ENCODE measurements at regions of chr15 and their contacts with region 1.

Region 1: GRCh38 chr15:44207643-44208042 is 12.6 kb upstream of the FRMD5 start:
- DNase-seq: no peak
- ATAC-seq: no peak
- H3K4me3 Mint-ChIP-seq: no peak overlapping the region
- H3K27ac Mint-ChIP-seq: no peak overlapping the region
- H3K4me1 Mint-ChIP-seq: no peaks in the 10 kb centered on the region
- H3K27me3 Mint-ChIP-seq: peaks cover 12% of the 10 kb centered on the region

Region 2: DNA sequence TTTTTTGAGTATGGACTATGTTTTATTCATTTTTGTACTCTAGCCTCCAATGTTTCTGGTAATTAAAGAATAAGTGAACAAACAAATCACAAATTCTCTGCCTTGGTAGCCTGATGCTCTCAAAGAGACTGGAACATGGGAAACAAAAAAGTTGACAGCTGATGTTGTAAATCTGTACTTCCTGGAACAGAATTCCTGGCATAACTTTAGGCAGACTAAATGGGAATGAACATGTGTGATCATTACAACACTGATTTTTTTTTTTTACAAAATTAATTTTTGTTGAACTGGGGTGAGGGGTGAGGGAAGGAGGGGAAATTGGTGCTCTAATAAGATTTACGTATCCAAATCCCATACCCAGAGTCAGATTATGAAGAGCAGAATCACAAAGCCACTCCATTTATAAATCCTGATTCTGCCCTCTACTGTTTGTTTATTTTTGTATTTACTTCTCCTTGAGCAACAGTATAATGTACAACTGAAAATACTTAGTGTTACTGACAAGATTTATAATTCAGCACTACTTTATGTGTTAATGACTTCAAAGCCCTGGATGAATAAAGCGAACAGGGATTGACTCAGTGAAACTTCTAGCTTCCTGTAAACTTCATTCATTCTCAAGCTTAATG is 177.6 kb before region 1 on chr15:
- CTCF ChIA-PET with region 1: no interaction called
- POLR2A ChIA-PET with region 1: no interaction called
- intact Hi-C with region 1: no loop called
- DNase-seq: no peak
- ATAC-seq: no peak
- H3K4me3 Mint-ChIP-seq: no peak overlapping the region
- H3K27ac Mint-ChIP-seq: no peak overlapping the region
- H3K4me1 Mint-ChIP-seq: peaks cover 5% of the 10 kb centered on the region
- H3K27me3 Mint-ChIP-seq: peaks cover 15% of the 10 kb centered on the region

Region 3: GRCh38 chr15:44188795-44189194 is 18.8 kb before region 1 on chr15:
- CTCF ChIA-PET with region 1: interaction called, 4 read pairs
- POLR2A ChIA-PET with region 1: no interaction called
- intact Hi-C with region 1: loop called in 1 of 2 experiments (anchors 1 kb)
- DNase-seq: no peak
- ATAC-seq: no peak
- H3K4me3 Mint-ChIP-seq: no peak overlapping the region
- H3K27ac Mint-ChIP-seq: no peak overlapping the region
- H3K4me1 Mint-ChIP-seq: peaks cover 4% of the 10 kb centered on the region
- H3K27me3 Mint-ChIP-seq: peaks cover 31% of the 10 kb centered on the region

Measured in activated CD4-positive, alpha-beta T cell treated with anti-CD3 and anti-CD28 coated beads for 36 hours (primary cell).